ENCODE measurements at regions of chr3 and their contacts with region 1.

Region 1: GRCh38 chr3:151439652-151440129 is 21.2 kb downstream of the IGSF10 start:
- DNase-seq: peak; percentile 40
- H3K4me3 ChIP-seq: no peak overlapping the region
- H3K27ac ChIP-seq: no peak overlapping the region
- H3K4me1 ChIP-seq: no peaks in the 10 kb centered on the region
- H3K27me3 ChIP-seq: no peaks in the 10 kb centered on the region
- CTCF ChIP-seq: peak; percentile 88

Region 2: DNA sequence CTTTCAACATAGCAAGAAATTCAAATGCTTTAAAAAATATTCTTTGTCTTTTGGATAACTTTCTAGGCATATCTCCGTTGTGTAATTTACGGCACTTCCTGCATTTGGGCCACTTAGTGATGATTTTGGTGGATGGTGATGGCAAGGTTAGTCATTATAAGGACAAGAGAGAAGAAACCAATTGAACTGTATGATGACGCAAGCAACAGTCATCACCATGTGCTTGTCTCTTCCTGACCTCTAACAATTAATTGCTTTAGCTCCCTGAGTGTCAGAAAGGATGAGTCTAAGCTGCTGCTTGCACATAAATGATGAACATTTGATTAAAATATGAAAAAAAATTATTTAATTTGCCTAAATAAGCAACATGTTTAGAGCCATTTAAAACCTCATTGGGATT is 43.9 kb before region 1 on chr3:
- intact Hi-C with region 1: no loop called
- DNase-seq: no peak
- H3K4me3 ChIP-seq: no peak overlapping the region
- H3K27ac ChIP-seq: no peak overlapping the region
- H3K4me1 ChIP-seq: no peaks in the 10 kb centered on the region
- H3K27me3 ChIP-seq: no peaks in the 10 kb centered on the region
- CTCF ChIP-seq: no peak

Region 3: GRCh38 chr3:151838583-151839312 is 399.1 kb after region 1 on chr3:
- intact Hi-C with region 1: loop called (anchors 2 kb)
- DNase-seq: peak; percentile 62
- H3K4me3 ChIP-seq: no peak overlapping the region
- H3K27ac ChIP-seq: no peak overlapping the region
- H3K4me1 ChIP-seq: no peaks in the 10 kb centered on the region
- H3K27me3 ChIP-seq: no peaks in the 10 kb centered on the region
- CTCF ChIP-seq: peak; percentile 70

Region 4: GRCh38 chr3:151918253-151919029 is 478.8 kb after region 1 on chr3:
- intact Hi-C with region 1: loop called (anchors 5 kb)
- DNase-seq: no peak
- H3K4me3 ChIP-seq: no peak overlapping the region
- H3K27ac ChIP-seq: no peak overlapping the region
- H3K4me1 ChIP-seq: no peaks in the 10 kb centered on the region
- H3K27me3 ChIP-seq: no peaks in the 10 kb centered on the region
- CTCF ChIP-seq: peak; percentile 50